ENCODE measurements at regions of chr11 and their contacts with region 1.

Region 1: DNA sequence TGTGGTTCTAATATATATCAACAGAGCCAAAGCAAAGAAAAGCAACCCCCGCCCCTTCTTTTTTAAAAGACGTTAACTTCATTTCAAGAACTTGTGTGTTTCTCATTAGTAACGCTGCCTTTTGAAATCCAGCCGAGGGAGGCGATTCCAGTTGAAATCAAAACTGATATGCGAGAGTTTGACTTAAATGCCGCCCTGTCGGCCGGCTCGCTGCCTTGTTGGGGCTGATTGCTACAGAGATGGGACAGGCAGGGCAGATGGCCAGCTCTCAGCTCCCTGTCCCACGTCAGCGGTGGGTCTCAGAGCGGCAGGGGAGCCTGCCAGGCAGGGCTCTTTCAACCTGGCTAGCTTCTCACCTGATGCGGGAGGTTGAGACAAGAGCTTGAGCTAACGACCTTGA is 51.9 kb upstream of the ALX4 start:
- DNase-seq: no peak
- ATAC-seq: no peak; the same call in 1 of the 3 replicates
- H3K4me3 ChIP-seq: no peak overlapping the region
- H3K27ac ChIP-seq: no peak overlapping the region
- H3K4me1 ChIP-seq: peaks cover 5 to 12% of the 10 kb centered on the region in 2 experiments; a peak in 3 of 5 replicates
- H3K27me3 ChIP-seq: peaks cover 33 to 58% of the 10 kb centered on the region in 2 experiments
- CTCF ChIP-seq: no peak
- EP300 ChIP-seq: no peak
- POLR2A ChIP-seq: no peak
- RAD21 ChIP-seq: no peak

Region 2: GRCh38 chr11:44427432-44427831 is 65.6 kb after region 1 on chr11:
- CTCF ChIA-PET with region 1: no interaction called
- POLR2A ChIA-PET with region 1: no interaction called
- in situ Hi-C with region 1: no loop called
- intact Hi-C with region 1: loop called (anchors 10 kb)
- DNase-seq: peak; percentile 64 to 77 (median 72)
- ATAC-seq: peak; percentile 96
- H3K4me3 ChIP-seq: no peak overlapping the region
- H3K27ac ChIP-seq: no peak overlapping the region
- H3K4me1 ChIP-seq: no peaks in the 10 kb centered on the region; a peak in 1 of 5 replicates
- H3K27me3 ChIP-seq: peaks cover 29 to 42% of the 10 kb centered on the region in 2 experiments; a peak in 4 of 5 replicates
- CTCF ChIP-seq: peak; percentile 73 to 84 (median 78)
- EP300 ChIP-seq: no peak
- POLR2A ChIP-seq: no peak
- RAD21 ChIP-seq: peak; percentile 19 to 36; a peak in 3 of 4 replicates

Measured in K562 (cell line).